ENCODE measurements at regions of chr11 and their contacts with region 1.

Region 1: DNA sequence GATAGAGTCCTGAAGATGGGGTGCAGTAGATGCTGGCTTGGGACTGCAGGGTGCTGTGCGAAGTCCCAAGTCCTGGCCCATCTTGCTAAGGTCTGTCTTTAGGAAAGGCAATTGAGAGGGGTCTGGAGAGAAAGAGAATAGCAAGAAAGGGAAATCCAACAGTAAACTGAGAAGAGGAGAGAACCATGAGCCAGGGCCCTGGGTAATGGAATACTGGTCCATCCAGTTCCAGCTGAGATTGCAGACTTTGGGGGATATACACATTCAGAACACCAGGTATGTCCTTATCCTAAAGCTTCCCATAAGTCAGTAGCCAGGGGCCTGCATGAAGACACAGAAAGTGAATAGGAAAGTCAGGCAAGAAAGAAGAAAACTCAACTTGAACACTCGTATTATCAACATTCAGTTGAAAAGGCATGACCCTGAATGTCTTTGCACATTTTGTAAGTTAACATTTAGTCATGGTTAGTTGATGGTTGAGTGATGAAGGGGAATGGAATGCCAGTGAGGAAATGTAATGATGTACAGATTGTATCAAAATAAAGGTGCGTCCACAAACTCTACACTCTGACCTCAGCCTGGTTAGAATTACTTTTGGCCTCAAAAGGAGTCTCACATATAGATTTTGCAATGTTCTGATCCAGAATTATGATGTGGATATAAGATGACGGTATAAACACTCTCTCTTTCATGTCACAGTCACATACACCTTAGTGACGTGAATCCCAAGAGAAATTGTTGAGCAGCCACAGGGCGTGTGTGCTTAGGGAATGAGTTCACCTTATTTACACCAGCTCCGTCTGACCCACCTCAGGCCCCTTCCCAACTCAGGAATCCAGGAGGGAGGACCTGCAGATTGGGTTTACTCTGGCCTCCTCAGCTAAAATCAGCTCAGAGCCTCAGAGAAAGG is 100.3 kb downstream of the RDX start:
- DNase-seq: no peak
- H3K4me3 ChIP-seq: no peak overlapping the region
- CTCF ChIP-seq: no peak

Region 2: GRCh38 chr11:110173811-110174644 is 22.1 kb before region 1 on chr11:
- CTCF ChIA-PET with region 1: interaction called, 10 read pairs
- POLR2A ChIA-PET with region 1: no interaction called
- DNase-seq: no peak
- H3K4me3 ChIP-seq: peak overlapping the region; percentile 29; the same call in 1 of the 2 replicates
- CTCF ChIP-seq: peak; percentile 75

Region 3: GRCh38 chr11:110219011-110219785 is 23.1 kb after region 1 on chr11:
- CTCF ChIA-PET with region 1: interaction called, 16 read pairs
- POLR2A ChIA-PET with region 1: no interaction called
- DNase-seq: no peak
- H3K4me3 ChIP-seq: no peak overlapping the region
- CTCF ChIP-seq: no peak

Region 4: DNA sequence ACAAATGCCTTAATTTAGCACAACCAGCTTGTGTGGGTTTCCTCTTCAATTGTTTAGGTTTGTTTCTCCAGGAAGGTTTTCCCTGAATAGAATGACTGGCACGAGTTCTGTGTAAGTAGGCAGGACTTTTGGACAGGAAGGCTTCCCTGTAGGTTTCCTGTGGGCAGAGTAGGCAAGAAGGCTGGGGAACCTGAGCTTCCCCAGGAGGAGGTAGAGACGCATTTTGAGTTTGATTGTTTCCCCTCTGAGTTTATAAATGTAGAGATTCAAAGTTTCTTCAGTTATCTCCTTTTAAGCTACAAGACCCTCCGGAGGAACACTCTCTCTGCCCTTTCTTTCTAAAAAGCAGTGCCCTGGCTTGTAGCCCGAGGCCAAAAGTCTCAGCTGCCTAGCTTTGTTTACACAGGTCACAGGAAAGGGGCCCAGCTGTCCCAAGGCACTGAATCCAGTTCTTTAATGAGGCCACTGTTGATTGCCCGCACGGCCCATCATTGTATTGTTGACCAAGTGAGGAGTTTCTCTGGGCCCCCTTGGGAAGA is 166.9 kb after region 1 on chr11:
- CTCF ChIA-PET with region 1: interaction called, 88 read pairs
- POLR2A ChIA-PET with region 1: no interaction called
- DNase-seq: no peak
- H3K4me3 ChIP-seq: no peak overlapping the region
- CTCF ChIP-seq: no peak

Region 5: GRCh38 chr11:110429731-110430266 is 233.7 kb after region 1 on chr11 and contains the start of gene FDX1:
- CTCF ChIA-PET with region 1: interaction called, 205 read pairs
- POLR2A ChIA-PET with region 1: no interaction called
- DNase-seq: no peak
- H3K4me3 ChIP-seq: peak within 1 kb of the TSS; percentile 89
- CTCF ChIP-seq: peak; percentile 63

Measured in AG04449 (cell line).